Posterior cingulate gyrus (tissue), 11 donors: ENCODE measurements at regions of chr3 and their contacts with region 1.

Region 1: GRCh38 chr3:132180337-132180791 is 136.8 kb upstream of the ACP3 start:
- DNase-seq: peak in 1 of 10 donors; percentile 77

Region 2: DNA sequence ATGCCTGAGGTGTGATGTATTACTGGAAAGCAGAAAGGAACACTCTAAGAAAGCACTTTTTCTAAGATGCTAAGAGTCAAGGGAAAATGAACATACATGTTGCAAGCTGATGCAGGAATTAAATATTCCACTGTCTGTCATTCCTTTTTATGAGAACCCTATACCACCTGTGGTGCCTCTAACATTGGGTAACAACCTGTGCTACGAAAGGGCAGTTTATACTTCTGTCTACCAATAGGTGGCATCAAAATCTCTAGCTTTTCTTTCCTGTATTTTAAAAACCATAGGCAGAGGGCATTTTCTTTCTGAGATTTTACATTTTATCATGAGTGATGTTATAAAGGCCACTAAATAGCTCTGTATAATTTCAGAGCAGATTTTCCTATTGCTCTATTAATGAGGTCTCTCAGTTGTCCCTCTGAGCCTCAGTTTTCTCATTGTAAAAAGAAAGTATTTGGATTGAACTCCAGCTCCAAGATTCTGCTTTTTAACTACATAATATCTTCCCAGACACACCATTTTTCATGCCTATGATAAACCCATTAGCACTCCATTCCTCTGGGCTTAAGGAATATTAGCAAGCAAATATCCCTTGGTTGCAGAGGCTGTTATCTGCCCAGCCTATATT is 142.1 kb before region 1 on chr3:
- intact Hi-C with region 1: loop called (anchors 2 kb)
- DNase-seq: no peak

Region 3: DNA sequence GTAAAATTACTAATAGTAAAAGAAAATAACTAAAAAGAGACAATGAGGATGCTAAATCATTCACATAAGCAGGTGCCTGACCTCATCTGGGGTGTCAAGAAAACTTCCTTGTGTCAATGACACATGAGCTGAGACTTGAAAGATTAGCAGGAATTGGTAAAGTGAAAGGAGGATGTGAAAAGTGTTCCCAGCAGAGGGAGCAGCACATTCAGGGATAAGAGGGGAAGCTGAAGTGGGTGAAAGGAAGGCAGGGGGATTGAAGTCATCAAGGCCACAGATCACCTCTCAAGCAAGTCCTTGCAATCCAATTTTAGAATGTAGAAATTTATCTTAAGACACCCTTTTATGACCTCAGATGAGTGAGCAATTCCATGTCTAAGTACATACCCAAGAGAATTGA is 76.6 kb after region 1 on chr3:
- intact Hi-C with region 1: no loop called
- DNase-seq: peak in 3 of 10 donors; percentile 11 to 43 (median 11)